Cardiac septum (tissue), 1 donor: ENCODE measurements at regions of chr6 and their contacts with region 1.

Region 1: GRCh38 chr6:26596579-26597388 is at the start of gene ABT1:
- DNase-seq: peak; percentile 99
- total RNA-seq, gene ABT1: 7.4 TPM

Region 2: GRCh38 chr6:26175428-26176181 is 421.2 kb before region 1 on chr6:
- intact Hi-C with region 1: loop called (anchors 10 kb)
- DNase-seq: no peak

Region 3: DNA sequence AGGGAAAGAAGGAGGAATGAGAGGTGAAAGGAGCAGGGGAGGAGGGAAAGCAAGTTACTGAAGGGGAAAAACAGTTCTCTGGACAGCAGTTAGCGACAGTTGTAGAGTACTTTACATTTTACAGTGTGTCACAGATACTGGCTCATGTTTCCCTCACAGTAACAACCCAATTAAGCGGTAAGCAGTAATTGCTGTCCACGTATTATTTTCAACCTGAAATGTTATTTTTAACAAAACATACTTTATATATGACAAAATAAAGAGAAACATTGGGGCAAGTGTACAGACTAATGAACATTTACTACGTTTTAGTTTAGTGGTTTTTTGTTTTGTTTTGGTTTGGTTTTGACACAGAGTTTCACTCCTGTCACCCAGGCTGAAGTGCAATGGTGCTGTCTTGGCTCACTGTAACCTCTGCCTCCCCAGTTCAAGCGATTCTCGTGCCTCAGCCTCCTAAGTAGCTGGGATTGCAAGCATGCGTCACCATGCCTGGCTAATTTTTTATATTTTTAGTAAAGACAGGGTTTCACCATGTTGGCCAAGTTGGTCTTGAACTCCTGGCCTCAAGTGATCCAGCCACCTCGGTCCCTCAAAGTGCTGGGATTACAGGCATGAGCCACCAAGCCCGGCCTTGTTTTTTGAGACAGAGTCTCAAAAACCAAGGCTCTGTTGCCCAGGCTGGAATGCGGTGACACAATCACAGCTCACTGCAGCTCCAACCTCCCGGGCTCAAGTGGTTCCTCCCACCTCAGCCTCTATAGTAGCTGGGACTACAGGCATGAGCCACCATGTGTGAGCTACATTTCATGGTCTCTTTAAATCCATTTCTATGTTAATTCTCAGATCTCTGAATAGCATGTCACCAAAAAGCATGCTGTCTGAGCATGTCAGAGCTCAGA is 254.4 kb before region 1 on chr6:
- intact Hi-C with region 1: loop called (anchors 1 kb)
- DNase-seq: no peak

Region 4: DNA sequence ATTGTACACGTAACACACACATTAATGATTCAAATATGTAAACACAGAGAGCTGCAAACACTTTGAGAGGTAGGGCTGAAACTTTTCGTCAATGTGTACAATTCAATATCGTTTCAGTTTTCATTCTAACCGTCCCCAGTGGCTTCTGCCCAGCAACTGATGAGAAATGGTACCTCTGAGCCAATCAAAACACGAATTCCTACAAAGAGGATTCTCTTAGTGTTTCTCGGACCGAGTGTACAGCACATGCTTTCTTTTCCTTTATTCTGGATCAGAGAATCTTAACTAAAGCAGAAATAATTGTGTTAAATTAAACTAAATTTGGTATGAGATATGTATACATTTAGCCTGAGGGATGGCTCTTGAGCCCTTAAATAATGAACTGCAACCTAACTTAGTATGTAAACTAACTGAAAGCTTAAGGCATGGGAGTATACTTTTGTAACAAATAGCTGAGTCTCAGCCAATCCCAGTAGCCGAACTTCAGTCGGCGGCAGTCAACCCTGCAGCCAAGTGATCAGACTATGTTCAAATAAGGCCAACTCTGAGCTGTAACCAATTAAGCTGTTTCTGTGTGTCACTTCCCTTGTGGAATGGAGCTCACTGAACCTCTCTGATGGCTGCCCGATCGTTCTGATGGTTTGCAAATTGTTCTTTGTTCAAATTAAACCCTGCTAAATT is 122.9 kb before region 1 on chr6:
- intact Hi-C with region 1: no loop called
- DNase-seq: peak; percentile 89

Region 5: DNA sequence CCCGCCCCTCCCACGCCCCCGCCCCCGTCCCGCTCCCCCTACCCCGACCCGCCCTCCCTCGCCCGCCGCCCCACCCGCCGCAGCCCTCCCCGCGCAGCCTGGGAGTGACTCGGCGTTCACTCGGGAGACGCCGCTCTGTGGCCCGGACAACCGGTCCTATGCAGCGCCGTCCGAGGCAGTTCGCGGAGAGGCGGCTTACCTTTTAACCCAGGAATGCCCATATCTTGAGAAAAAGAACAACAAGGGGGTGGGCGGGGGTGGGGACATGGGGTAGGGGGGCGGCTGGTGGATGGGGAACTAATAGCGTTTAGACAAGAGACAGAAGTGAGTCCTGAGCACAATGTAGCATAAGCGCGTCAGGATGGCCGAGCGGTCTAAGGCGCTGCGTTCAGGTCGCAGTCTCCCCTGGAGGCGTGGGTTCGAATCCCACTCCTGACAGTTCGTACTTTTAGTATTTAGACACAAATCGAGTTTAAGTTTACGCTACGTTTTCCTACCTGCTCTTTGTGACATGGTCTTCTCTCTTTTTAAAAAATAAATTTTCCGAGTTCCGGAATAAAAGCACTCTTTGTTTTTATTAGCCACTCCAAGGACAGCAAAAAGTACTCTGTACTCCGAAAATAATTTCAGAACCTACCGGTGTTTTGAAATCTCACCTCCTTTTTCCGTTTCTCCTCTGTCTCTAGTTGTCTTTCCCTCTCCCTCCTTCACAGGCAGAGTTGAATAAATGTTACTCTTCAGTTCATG is 75.8 kb before region 1 on chr6:
- intact Hi-C with region 1: loop called (anchors 2 kb)
- DNase-seq: peak; percentile 94

Region 6: GRCh38 chr6:26553635-26554446 is 42.9 kb before region 1 on chr6:
- intact Hi-C with region 1: no loop called
- DNase-seq: no peak

Region 7: DNA sequence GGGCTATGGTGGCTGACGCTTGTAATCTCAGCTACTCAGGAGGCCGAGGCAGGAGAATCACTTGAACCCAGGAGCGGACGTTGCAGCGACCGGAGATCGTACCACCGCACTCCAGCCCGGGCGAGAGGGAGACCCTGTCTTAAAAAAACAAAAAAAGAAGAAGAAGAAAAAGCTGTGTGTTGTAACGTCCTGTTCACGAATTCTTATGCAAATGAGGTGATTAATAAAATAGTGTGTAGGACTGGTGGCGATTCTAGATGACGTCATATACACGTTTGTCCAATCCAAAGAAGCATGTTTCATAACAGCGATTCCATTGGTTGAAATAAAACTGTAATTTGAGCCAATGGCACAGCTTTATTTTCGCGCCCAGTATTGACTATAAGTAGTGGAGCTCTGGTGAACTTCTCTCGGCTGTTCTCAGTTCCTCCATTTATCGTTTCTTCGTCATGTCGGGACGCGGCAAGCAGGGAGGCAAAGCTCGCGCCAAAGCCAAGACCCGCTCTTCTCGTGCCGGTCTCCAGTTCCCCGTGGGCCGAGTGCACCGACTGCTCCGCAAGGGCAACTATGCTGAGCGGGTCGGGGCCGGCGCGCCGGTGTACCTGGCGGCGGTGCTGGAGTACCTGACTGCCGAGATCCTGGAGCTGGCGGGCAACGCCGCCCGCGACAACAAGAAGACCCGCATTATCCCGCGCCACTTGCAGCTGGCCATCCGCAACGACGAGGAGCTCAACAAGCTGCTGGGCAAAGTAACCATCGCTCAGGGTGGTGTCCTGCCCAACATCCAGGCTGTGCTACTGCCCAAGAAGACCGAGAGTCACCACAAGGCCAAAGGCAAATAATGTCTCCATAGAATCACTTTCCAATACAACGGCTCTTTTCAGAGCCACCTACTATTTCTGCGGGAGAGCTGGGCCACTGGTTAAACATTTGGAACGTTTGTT is 1268.4 kb after region 1 on chr6:
- intact Hi-C with region 1: loop called (anchors 10 kb)
- DNase-seq: peak; percentile 78